AG04450 (cell line): ENCODE measurements at regions of chr7 and their contacts with region 1.

Region 1: DNA sequence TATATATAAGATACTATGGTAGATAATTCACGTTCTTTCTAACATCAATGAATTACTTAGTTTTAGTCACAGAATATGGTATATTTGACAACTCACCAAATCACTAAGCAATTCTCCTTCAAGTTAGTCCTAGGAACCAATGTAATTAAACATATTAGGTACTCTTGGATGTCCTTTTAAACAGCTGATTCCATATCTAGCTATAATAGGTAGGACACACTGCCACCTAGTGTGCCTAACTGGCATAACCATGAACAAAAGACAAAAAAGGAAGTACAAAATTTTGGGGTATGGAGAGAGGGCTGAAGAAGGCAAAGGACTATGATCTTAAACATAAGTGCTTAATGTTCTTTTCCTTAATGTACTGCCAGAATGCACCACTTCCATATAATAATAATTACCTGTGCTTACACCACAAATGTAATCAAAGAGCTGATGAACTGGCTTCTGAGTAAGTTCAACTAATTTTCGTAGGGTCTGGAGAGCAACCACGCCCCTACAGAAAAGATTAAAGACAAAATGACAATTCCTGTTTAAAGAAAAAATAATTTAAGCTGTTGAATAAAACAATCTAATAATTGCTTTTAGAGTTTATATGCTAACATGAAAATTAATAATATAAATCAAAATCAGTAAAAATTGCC is 28.7 kb downstream of the PNPLA8 start:
- DNase-seq: peak; percentile 3
- H3K4me3 ChIP-seq: no peak overlapping the region
- H3K27ac ChIP-seq: no peak overlapping the region
- H3K27me3 ChIP-seq: no peaks in the 10 kb centered on the region
- CTCF ChIP-seq: peak; percentile 86

Region 2: DNA sequence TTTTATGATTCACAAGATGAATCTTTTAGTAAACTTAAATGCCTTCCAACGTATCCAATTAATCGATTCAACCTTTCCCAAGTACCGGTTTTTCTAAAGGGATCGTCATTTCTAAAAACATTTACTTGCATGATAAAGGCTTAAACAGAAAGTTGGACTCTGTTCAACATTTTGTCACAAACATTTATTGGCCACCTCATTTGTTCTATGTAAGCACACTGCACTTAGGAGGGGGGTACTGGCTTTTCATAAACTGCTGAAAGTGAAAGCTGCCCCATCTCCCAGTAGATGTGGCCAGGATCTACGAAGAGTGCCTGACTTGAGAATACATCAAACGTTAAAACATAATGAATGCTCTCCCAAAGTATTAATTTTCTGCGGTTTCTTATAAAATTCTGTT is 329.7 kb before region 1 on chr7:
- CTCF ChIA-PET with region 1: interaction called, 12 read pairs
- POLR2A ChIA-PET with region 1: no interaction called
- DNase-seq: no peak
- H3K4me3 ChIP-seq: peak overlapping the region; percentile 50
- H3K27ac ChIP-seq: no peak overlapping the region
- H3K27me3 ChIP-seq: no peaks in the 10 kb centered on the region
- CTCF ChIP-seq: no peak

Region 3: GRCh38 chr7:108193611-108194498 is 303.3 kb before region 1 on chr7:
- CTCF ChIA-PET with region 1: interaction called, 12 read pairs
- POLR2A ChIA-PET with region 1: no interaction called
- DNase-seq: no peak
- H3K4me3 ChIP-seq: no peak overlapping the region
- H3K27ac ChIP-seq: no peak overlapping the region
- H3K27me3 ChIP-seq: no peaks in the 10 kb centered on the region
- CTCF ChIP-seq: no peak

Region 4: DNA sequence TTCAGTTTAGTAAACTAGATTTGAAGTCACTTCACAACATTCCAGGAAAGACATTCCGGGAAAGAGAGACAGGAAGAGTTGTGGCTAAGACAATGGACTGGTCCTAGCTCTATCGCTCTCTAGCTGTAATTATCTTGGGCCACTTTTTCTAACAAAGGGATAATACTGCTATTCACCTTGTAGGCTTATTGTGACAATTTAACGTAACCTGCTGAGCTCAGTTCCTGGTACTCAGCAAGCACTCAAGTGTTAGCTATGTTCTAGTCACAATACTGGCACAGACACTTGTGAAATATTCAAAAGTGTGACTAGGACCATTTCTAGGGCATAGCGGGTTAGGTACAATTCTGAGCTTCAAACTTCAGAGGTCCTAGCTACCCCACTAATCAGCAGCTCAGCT is 29.0 kb before region 1 on chr7:
- CTCF ChIA-PET with region 1: interaction called, 25 read pairs
- POLR2A ChIA-PET with region 1: interaction called, 10 read pairs
- DNase-seq: no peak
- H3K4me3 ChIP-seq: no peak overlapping the region
- H3K27ac ChIP-seq: no peak overlapping the region
- H3K27me3 ChIP-seq: no peaks in the 10 kb centered on the region
- CTCF ChIP-seq: no peak

Region 5: DNA sequence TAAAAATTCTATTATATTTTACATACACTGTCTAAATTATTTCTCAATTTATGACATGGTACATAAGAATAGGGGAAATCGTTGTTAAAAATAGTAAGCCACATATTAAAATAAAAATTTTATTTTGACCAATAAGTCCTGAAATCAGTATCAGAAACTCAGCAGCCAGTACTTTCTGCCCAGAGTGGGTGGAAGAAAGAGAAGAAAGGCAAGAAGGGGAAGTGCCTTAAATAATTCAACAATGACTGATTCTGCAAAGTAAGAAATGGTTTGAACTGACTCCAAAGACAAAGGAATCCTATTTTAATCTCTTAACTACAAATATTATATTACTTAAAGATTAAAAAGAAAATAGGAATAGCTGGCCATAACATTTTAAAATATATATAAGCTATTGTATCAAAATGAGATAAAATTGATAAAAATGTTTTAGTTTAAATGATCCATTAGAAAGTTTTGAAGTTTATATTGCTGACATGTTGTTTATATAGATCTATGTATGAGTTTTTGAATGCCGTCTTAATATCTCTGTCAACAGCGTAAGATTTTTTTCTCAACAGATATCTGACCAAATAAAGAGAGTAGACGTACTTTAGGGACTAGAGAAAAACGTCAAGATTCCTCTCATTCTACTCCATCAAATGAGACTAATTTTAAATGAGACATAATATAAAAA is 10.8 kb before region 1 on chr7:
- CTCF ChIA-PET with region 1: interaction called, 76 read pairs
- POLR2A ChIA-PET with region 1: no interaction called
- DNase-seq: peak; percentile 6
- H3K4me3 ChIP-seq: no peak overlapping the region
- H3K27ac ChIP-seq: no peak overlapping the region
- H3K27me3 ChIP-seq: no peaks in the 10 kb centered on the region
- CTCF ChIP-seq: no peak

Region 6: DNA sequence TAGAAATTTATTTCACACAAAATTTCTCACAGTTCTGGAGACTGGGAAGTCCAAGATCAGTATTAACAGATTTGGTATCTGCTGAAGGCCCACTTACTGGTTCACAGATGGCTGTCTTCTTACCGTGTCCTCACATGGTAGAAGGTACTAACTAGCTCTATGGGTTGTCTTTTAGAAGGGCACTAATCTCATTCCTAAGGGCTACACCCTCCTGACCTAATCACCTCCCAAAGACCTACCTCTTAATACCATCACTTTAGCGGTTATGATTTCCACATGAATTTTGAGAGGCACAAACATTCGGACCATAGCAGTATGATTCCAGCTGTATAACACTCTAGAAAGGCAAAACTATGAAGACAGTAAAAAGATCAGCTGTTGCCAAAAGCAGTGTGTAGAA is 20.7 kb after region 1 on chr7:
- CTCF ChIA-PET with region 1: interaction called, 60 read pairs
- POLR2A ChIA-PET with region 1: no interaction called
- DNase-seq: no peak
- H3K4me3 ChIP-seq: no peak overlapping the region
- H3K27ac ChIP-seq: no peak overlapping the region
- H3K27me3 ChIP-seq: no peaks in the 10 kb centered on the region
- CTCF ChIP-seq: no peak

Region 7: GRCh38 chr7:108613112-108613759 is 116.0 kb after region 1 on chr7:
- CTCF ChIA-PET with region 1: no interaction called
- POLR2A ChIA-PET with region 1: no interaction called
- DNase-seq: no peak
- H3K4me3 ChIP-seq: no peak overlapping the region
- H3K27ac ChIP-seq: no peak overlapping the region
- H3K27me3 ChIP-seq: no peaks in the 10 kb centered on the region
- CTCF ChIP-seq: peak; percentile 71